Activated naive CD4-positive, alpha-beta T cell treated with anti-CD3 and anti-CD28 coated beads for 36 hours (primary cell): ENCODE measurements at regions of chr16 and their contacts with region 1.

Region 1: GRCh38 chr16:80580109-80580832 is 39.5 kb downstream of the DYNLRB2 start:
- DNase-seq: peak; percentile 90
- H3K4me3 Mint-ChIP-seq: peak overlapping the region; percentile 59
- H3K27ac Mint-ChIP-seq: peak overlapping the region; percentile 91
- H3K4me1 Mint-ChIP-seq: peaks cover 46% of the 10 kb centered on the region
- H3K27me3 Mint-ChIP-seq: no peaks in the 10 kb centered on the region

Region 2: GRCh38 chr16:80433623-80434022 is 146.6 kb before region 1 on chr16:
- CTCF ChIA-PET with region 1: no interaction called
- intact Hi-C with region 1: no loop called
- DNase-seq: no peak
- H3K4me3 Mint-ChIP-seq: no peak overlapping the region
- H3K27ac Mint-ChIP-seq: no peak overlapping the region
- H3K4me1 Mint-ChIP-seq: no peaks in the 10 kb centered on the region
- H3K27me3 Mint-ChIP-seq: peaks cover 25% of the 10 kb centered on the region

Region 3: GRCh38 chr16:80518436-80518835 is 61.8 kb before region 1 on chr16:
- CTCF ChIA-PET with region 1: no interaction called
- intact Hi-C with region 1: loop called (anchors 1 kb)
- DNase-seq: peak; percentile 71
- H3K4me3 Mint-ChIP-seq: no peak overlapping the region
- H3K27ac Mint-ChIP-seq: no peak overlapping the region
- H3K4me1 Mint-ChIP-seq: peaks cover 21% of the 10 kb centered on the region
- H3K27me3 Mint-ChIP-seq: peaks cover 20% of the 10 kb centered on the region

Region 4: DNA sequence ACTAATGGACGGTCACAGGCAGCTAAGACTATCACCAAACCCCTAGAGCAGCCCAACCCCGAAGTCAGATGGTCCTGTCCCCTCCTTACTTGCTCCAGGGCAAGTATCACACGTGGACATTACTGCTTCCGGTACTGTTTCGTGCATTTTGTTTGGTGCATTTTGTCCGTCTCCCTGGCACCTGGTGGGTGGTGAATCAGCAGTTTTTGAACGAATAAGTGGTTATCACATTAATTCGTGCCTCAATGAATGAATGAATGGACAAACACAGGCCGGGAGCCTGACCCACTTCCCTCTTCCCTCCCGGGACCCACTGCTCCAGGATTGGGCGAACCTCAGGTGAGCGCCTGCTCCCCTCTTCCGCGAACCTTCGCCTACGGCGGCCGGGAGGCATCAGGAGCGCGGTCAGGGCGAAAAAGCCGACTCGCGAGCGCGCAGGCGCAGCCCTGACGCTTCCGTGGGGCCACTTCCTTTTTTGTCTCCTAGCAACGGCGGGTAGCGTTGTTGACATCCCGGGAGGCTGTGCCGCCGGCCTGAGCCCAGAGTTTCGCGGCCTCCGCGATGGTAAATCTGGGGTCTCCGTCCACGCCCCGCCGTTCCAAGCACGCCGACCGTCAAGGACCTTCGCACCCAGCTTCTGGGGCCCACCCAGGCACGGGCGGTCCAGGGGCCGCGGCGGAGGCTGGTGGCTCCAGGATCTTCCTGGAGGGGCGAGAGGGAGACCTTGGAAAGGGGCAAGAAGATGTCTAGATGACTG is 39.6 kb before region 1 on chr16 and contains the start of gene DYNLRB2:
- CTCF ChIA-PET with region 1: interaction called, 4 read pairs
- intact Hi-C with region 1: loop called (anchors 1 kb)
- DNase-seq: peak; percentile 94
- H3K4me3 Mint-ChIP-seq: peak within 1 kb of the TSS; percentile 95
- H3K27ac Mint-ChIP-seq: peak within 1 kb of the TSS; percentile 97
- H3K4me1 Mint-ChIP-seq: peaks cover 16% of the 10 kb centered on the region
- H3K27me3 Mint-ChIP-seq: no peaks in the 10 kb centered on the region
- total RNA-seq, gene DYNLRB2: not detected

Region 5: GRCh38 chr16:80656711-80657150 is 76.5 kb after region 1 on chr16:
- CTCF ChIA-PET with region 1: interaction called, 3 read pairs
- intact Hi-C with region 1: loop called (anchors 1 kb)
- DNase-seq: peak; percentile 49
- H3K4me3 Mint-ChIP-seq: peak overlapping the region; percentile 73
- H3K27ac Mint-ChIP-seq: peak overlapping the region; percentile 68
- H3K4me1 Mint-ChIP-seq: peaks cover 20% of the 10 kb centered on the region
- H3K27me3 Mint-ChIP-seq: no peaks in the 10 kb centered on the region

Region 6: DNA sequence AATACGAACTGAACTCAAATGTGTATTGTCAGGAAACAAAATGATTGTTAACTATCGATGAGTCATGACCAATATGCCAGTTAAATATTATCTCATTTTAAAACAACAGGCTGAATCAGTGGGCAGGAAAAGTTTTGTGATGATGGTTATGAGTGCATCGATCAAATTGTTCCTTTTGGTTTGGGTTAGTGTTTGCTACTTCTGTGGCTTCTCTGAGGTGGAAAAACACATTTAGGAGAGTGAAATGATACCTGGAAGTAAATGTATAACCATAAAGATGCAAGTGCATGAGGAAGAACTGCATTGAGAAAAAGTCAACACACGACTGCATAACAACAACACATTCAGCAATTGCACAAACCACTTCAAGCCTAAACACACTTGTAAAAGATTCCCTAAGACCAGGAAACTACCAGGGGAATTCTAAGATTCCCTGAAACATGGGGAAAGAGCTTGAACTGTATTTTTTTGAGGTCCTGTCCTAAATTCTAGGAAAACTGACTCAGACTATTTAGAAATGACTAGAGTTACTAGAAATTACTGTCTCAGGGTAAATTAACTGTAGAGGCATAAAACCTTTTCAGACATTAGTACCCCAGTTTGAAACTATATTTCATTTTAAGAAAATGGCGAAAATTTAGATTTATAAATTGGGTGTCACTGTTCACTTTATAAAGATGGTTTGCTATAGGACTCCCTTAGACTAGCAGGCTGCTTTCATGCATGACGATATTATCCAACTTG is 179.3 kb after region 1 on chr16:
- CTCF ChIA-PET with region 1: no interaction called
- intact Hi-C with region 1: loop called (anchors 2 kb)
- DNase-seq: no peak
- H3K4me3 Mint-ChIP-seq: no peak overlapping the region
- H3K27ac Mint-ChIP-seq: no peak overlapping the region
- H3K4me1 Mint-ChIP-seq: peaks cover 10% of the 10 kb centered on the region
- H3K27me3 Mint-ChIP-seq: no peaks in the 10 kb centered on the region

Region 7: DNA sequence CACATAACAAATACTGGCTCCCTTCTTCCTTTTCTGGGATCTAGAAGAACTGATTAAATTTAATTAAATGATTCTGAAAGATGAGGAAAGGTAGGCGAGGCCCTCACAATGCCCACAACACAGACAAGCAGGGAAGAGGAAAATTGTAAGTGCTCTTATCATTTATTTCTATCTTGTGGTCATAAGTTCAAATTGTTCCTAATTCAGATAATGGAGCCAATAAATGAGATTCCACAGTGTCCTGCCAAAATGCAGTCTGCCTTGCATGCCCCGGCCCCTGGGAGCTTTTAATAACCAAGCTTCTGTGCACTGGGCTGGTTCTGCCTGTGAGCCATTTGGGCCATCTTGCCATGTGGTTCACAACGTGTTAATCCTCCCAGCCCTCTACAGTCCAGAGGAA is 329.4 kb after region 1 on chr16:
- CTCF ChIA-PET with region 1: no interaction called
- intact Hi-C with region 1: no loop called
- DNase-seq: no peak
- H3K4me3 Mint-ChIP-seq: no peak overlapping the region
- H3K27ac Mint-ChIP-seq: no peak overlapping the region
- H3K4me1 Mint-ChIP-seq: no peaks in the 10 kb centered on the region
- H3K27me3 Mint-ChIP-seq: peaks cover 12% of the 10 kb centered on the region

Region 8: DNA sequence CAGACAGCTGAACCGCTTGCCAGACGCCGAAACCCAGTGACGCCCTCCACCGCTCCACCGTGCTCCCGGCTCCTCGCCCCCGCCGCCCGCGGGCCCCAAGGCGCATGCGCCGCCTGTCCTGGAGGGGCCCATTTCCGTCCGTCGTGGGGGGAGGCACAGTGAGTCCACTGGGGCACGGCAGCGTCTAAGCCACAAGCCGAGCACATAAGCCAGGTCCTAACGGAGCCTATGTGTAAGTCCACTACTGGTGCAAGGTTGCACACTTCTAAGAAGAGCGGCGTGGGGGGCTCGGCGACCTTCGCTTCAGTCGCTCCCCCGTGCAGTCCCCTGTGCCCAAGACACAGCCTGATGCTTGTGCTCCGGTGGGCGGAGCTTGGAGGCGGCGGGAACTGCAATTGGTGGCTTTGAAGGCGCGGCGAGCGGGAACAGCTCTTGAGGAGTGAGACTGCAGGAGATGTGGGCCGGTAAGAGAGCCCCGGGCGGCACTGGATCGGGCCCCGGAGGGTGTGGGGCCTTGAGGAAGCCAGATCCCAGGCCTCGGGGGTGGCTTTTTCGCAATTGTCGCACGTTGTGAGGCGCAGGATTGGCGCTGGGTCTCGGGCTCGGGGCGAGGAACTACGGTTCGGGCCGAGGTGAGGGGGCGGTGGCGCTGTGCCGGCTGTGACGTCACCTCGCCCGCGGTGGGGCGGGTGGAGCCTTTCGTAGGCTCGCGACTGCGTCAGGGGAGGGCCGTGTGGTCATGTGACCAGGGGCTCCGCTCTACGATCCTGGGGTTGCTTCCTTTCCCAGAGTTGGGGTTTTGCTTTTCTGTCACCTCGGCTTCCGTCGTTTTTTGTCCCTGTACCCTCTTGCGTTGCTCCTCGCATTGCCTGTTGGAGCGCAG is 426.8 kb after region 1 on chr16 and contains the starts of genes CENPN and CMC2:
- CTCF ChIA-PET with region 1: no interaction called
- intact Hi-C with region 1: loop called (anchors 2 kb)
- DNase-seq: peak; percentile 98
- H3K4me3 Mint-ChIP-seq: peak within 1 kb of the TSS; percentile 95
- H3K27ac Mint-ChIP-seq: peak within 1 kb of the TSS; percentile 100
- H3K4me1 Mint-ChIP-seq: peaks cover 50% of the 10 kb centered on the region
- H3K27me3 Mint-ChIP-seq: no peaks in the 10 kb centered on the region
- total RNA-seq, gene CENPN: 65.1 to 75.0 TPM
- total RNA-seq, gene CMC2: 112 to 122 TPM

Region 9: GRCh38 chr16:82192665-82193064 is 1612.4 kb after region 1 on chr16:
- CTCF ChIA-PET with region 1: no interaction called
- intact Hi-C with region 1: loop called (anchors 10 kb)
- DNase-seq: peak; percentile 64
- H3K4me3 Mint-ChIP-seq: no peak overlapping the region
- H3K27ac Mint-ChIP-seq: peak overlapping the region; percentile 70
- H3K4me1 Mint-ChIP-seq: peaks cover 21% of the 10 kb centered on the region
- H3K27me3 Mint-ChIP-seq: peaks cover 5% of the 10 kb centered on the region